Activated naive CD4-positive, alpha-beta T cell treated with anti-CD3 and anti-CD28 coated beads for 36 hours (primary cell): ENCODE measurements at regions of chr2 and their contacts with region 1.

Region 1: GRCh38 chr2:39513641-39514094 is 76.6 kb upstream of the MAP4K3 start:
- DNase-seq: peak; percentile 89
- H3K4me3 Mint-ChIP-seq: no peak overlapping the region
- H3K27ac Mint-ChIP-seq: peak overlapping the region; percentile 6
- H3K4me1 Mint-ChIP-seq: peaks cover 34% of the 10 kb centered on the region
- H3K27me3 Mint-ChIP-seq: no peaks in the 10 kb centered on the region

Region 2: DNA sequence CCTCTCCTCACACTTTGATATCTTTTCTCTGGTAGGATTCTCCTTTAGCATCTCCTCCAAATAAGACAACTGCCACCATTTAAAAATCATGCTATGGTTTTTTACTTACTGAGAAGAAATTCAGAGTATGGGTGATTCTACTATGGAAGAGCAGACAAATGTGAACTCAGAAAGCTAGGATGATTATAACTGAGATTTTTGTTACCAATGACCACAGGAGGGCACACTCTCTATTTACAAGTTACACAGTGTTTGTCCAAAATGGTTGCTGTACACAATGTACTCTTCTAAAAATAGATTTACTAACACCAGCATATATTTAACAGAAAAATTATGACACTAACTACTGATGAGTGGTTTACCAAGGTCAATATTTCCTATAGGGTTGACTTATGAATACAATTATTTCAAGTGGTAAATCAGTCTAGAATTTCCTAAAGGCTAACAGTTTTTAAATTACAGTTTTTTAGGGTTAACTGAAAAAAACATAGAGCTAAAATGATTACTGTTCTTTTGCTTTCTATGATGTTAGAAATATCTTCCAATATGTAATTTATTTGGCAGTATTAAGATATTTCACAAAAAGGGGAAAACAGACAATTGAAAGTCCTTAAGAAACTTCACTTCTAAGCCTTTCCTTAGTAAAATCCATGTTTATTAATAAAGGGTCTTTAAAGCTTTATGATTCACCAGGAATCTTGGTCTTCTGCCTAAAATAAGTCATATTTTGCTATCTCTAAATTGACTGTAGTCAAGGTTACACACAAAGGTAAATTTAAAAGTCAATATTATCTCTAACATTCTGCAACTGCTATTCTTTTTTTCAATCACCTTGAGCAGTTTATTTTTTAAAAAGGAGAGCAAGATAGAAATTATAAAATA is 133.8 kb before region 1 on chr2:
- CTCF ChIA-PET with region 1: interaction called, 4 read pairs
- intact Hi-C with region 1: loop called (anchors 1 kb)
- DNase-seq: no peak
- H3K4me3 Mint-ChIP-seq: no peak overlapping the region
- H3K27ac Mint-ChIP-seq: no peak overlapping the region
- H3K4me1 Mint-ChIP-seq: peaks cover 19% of the 10 kb centered on the region
- H3K27me3 Mint-ChIP-seq: no peaks in the 10 kb centered on the region

Region 3: DNA sequence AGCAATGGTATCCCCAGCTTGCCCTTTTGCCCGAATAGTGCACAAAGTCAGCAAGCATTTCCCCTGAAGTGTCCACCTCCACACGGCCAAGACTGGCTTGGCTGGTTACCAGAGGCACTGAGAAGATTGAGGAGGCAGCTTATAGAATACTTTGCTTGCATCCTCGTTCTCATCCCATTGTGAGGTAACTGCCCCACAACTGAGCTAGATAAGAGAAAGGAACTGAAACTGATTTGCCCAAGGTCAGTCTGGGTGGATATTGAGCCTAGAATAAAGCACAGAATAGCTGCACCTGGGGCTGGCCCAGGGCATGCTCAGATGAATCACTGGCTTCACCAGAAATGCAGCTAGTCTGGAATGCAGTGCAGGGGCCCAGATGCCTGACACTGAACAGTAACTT is 43.9 kb before region 1 on chr2:
- CTCF ChIA-PET with region 1: interaction called, 3 read pairs
- intact Hi-C with region 1: loop called (anchors 1 kb)
- DNase-seq: peak; percentile 39
- H3K4me3 Mint-ChIP-seq: no peak overlapping the region
- H3K27ac Mint-ChIP-seq: no peak overlapping the region
- H3K4me1 Mint-ChIP-seq: peaks cover 34% of the 10 kb centered on the region
- H3K27me3 Mint-ChIP-seq: no peaks in the 10 kb centered on the region

Region 4: GRCh38 chr2:39537150-39537549 is 23.5 kb after region 1 on chr2:
- CTCF ChIA-PET with region 1: no interaction called
- intact Hi-C with region 1: loop called (anchors 1 kb)
- DNase-seq: peak; percentile 19
- H3K4me3 Mint-ChIP-seq: no peak overlapping the region
- H3K27ac Mint-ChIP-seq: peak overlapping the region; percentile 39
- H3K4me1 Mint-ChIP-seq: peaks cover 16% of the 10 kb centered on the region
- H3K27me3 Mint-ChIP-seq: no peaks in the 10 kb centered on the region

Region 5: GRCh38 chr2:39778962-39779851 is 265.5 kb after region 1 on chr2 and contains the start of gene THUMPD2:
- CTCF ChIA-PET with region 1: no interaction called
- intact Hi-C with region 1: loop called (anchors 1 kb)
- DNase-seq: peak; percentile 68
- H3K4me3 Mint-ChIP-seq: peak within 1 kb of the TSS; percentile 77
- H3K27ac Mint-ChIP-seq: peak within 1 kb of the TSS; percentile 85
- H3K4me1 Mint-ChIP-seq: peaks cover 54% of the 10 kb centered on the region
- H3K27me3 Mint-ChIP-seq: no peaks in the 10 kb centered on the region
- total RNA-seq, gene THUMPD2: 13.6 to 13.8 TPM

Region 6: GRCh38 chr2:39948016-39948719 is 434.5 kb after region 1 on chr2:
- CTCF ChIA-PET with region 1: no interaction called
- intact Hi-C with region 1: loop called (anchors 10 kb)
- DNase-seq: no peak
- H3K4me3 Mint-ChIP-seq: no peak overlapping the region
- H3K27ac Mint-ChIP-seq: peak overlapping the region; percentile 91
- H3K4me1 Mint-ChIP-seq: peaks cover 28% of the 10 kb centered on the region
- H3K27me3 Mint-ChIP-seq: no peaks in the 10 kb centered on the region